Ovary (tissue), 10 donors: ENCODE measurements at regions of chr10 and their contacts with region 1.

Region 1: GRCh38 chr10:11894321-11895107 is 71.4 kb downstream of the PROSER2 start:
- DNase-seq: no peak
- H3K4me3 ChIP-seq: no peak overlapping the region
- H3K27ac ChIP-seq: no peak overlapping the region
- H3K4me1 ChIP-seq: no peaks in the 10 kb centered on the region
- H3K27me3 ChIP-seq: no peaks in the 10 kb centered on the region
- CTCF ChIP-seq: no peak
- EP300 ChIP-seq: no peak
- POLR2A ChIP-seq: no peak

Region 2: DNA sequence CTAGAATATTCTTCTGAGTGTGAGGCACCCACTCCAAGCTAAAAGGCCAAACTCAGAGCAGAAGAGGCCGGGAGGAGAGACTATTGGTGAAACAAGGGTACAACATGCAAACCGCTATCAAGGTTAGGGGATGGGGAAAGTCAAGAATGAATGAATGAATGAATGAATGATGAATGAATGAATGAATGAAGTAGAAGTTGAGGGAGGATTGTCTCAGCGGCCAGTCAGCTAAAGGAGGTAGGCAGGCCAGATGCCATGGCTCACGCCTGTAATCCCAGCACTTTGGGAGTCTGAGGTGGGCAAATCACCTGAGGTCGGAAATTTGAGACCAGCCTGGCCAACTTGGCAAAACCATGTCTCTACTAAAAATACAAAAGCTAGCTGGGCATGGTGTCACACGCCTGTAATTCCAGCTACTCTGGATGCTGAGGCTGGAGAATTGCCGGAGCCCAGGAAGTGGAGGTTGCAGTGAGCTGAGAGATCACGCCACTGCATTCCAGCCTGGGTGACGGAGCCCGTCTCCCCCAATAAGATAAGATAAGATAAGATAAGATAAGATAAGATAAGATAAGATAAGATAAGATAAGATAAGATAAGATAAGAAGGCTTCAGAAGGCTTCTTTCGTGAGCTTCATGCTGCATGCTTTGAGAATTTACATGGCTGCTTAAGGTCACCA is 856.1 kb after region 1 on chr10:
- intact Hi-C with region 1: loop called in 1 of 4 experiments (anchors 5 kb)
- DNase-seq: no peak
- H3K4me3 ChIP-seq: no peak overlapping the region
- H3K27ac ChIP-seq: no peak overlapping the region
- H3K4me1 ChIP-seq: no peaks in the 10 kb centered on the region
- H3K27me3 ChIP-seq: no peaks in the 10 kb centered on the region
- CTCF ChIP-seq: no peak
- EP300 ChIP-seq: no peak
- POLR2A ChIP-seq: no peak